Prostate gland (tissue), 2 donors: ENCODE measurements at regions of chr15 and their contacts with region 1.

Region 1: DNA sequence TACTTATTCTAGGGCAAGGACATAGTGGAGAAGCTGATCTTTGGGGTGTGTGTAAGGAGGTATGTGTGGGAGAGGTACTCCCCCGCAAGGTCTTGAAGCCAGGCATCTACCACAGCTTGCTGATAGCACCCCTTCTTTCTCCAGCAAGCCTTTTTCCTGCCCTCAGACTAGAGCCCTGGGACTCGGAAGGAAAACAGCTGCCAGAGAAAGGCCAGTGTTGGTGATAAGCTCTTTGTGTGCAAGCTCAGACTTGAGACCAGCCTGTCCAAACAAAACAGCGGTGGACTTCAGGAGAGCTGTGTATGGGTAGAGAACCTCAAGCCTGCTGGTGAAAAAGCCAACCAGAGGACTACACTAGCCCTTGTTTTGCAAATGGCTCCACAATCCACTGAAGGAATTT is 1028.6 kb downstream of the MCTP2 start:
- DNase-seq: no peak
- H3K4me3 ChIP-seq: no peak overlapping the region
- H3K27ac ChIP-seq: no peak overlapping the region
- H3K4me1 ChIP-seq: no peaks in the 10 kb centered on the region
- H3K27me3 ChIP-seq: no peaks in the 10 kb centered on the region
- CTCF ChIP-seq: no peak
- POLR2A ChIP-seq: no peak

Region 2: DNA sequence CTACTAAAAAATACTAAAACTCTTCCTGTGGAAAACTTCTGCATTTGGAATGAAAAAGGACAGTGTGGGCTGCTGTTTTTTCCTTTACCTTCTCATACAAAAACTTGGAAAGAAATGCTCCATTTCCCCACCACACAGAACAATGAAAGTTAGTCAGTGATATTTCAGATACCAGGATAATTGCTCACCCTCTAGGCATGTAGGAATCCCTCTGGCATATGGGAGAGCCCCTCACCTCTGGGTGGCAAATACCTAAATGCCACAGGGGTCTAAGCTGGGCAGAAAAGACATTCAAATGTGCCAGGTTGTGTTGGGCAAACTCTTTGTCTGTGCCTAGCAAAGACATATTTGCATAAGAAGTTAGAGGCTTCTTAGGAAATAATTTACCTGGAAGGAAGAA is 510.2 kb after region 1 on chr15:
- intact Hi-C with region 1: no loop called
- DNase-seq: no peak
- H3K4me3 ChIP-seq: no peak overlapping the region
- H3K27ac ChIP-seq: no peak overlapping the region
- H3K4me1 ChIP-seq: no peaks in the 10 kb centered on the region
- H3K27me3 ChIP-seq: no peaks in the 10 kb centered on the region
- CTCF ChIP-seq: no peak
- POLR2A ChIP-seq: no peak

Region 3: DNA sequence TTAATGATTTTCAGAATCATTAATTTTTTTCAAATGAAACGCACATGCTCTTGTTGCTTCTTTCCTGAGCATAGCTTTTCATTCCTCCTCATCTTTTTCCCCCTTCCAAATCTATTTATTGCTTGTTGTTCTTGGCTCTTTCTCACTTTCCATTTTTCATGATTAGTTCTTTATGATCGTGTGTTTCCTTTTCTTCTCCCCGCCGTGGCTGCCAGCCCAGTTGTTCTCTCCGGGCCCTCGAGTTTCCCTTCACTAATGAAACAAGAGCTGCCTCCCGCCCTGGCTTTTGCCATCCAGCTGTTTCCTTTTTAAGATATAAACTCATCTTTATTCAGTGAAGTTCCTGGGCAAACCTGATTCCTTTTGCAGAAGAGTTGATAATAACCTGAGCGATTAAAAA is 900.3 kb after region 1 on chr15:
- intact Hi-C with region 1: loop called (anchors 10 kb)
- DNase-seq: peak; percentile 36
- H3K4me3 ChIP-seq: no peak overlapping the region
- H3K27ac ChIP-seq: peak overlapping the region in 1 of 2 donors; percentile 48
- H3K4me1 ChIP-seq: no peaks in the 10 kb centered on the region
- H3K27me3 ChIP-seq: no peaks in the 10 kb centered on the region
- CTCF ChIP-seq: no peak
- POLR2A ChIP-seq: no peak

Region 4: GRCh38 chr15:96340598-96341512 is 1080.9 kb after region 1 on chr15:
- intact Hi-C with region 1: loop called (anchors 5 kb)
- DNase-seq: no peak
- H3K4me3 ChIP-seq: peak overlapping the region; percentile 73 to 76
- H3K27ac ChIP-seq: peak overlapping the region; percentile 91 to 95
- H3K4me1 ChIP-seq: no peaks in the 10 kb centered on the region
- H3K27me3 ChIP-seq: no peaks in the 10 kb centered on the region
- CTCF ChIP-seq: no peak
- POLR2A ChIP-seq: no peak